AG04450 (cell line): ENCODE measurements at regions of chr13 and their contacts with region 1.

Region 1: DNA sequence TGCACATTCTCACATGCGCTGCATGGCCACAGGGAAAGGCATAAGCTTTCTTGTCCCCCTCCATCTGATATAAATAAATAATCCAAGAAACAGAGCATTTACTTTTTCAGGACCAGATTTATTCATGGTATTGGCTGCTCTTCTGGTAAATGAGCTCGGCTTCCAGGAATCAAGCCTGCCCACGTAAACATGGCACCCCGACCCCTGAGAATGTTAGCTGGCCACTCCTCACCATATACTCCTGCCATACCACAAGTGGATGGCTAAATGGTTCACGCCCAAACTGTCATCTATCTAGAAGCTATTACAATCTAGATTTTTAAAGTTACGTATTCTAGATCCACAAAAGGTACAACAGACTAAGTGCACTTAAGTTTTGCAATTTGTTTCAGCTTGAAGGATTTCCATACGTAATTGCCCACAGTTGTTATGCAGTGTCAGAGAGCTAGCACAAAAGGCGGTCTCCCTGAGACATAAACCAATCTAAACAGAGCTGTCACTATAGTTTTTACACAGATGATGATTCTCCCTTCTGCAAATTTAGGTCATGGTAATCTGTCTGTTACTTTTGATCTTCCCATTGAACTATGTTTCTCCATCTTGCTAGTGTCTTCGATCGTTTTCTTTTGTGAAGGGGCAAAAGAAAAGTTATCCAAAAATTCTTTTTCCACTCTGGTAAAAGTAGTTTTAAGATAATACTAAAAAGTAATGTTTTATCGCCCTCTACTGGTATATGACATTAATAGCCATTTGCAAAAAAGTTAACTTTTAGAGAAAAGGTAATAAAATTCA is 16.2 kb upstream of the FOXO1 start:
- DNase-seq: no peak
- H3K4me3 ChIP-seq: no peak overlapping the region
- H3K27ac ChIP-seq: no peak overlapping the region
- H3K27me3 ChIP-seq: no peaks in the 10 kb centered on the region
- CTCF ChIP-seq: peak; percentile 53

Region 2: GRCh38 chr13:39684531-39685137 is 998.0 kb before region 1 on chr13:
- CTCF ChIA-PET with region 1: interaction called, 42 read pairs
- POLR2A ChIA-PET with region 1: no interaction called
- DNase-seq: no peak
- H3K4me3 ChIP-seq: no peak overlapping the region
- H3K27ac ChIP-seq: no peak overlapping the region
- H3K27me3 ChIP-seq: no peaks in the 10 kb centered on the region
- CTCF ChIP-seq: peak; percentile 34

Region 3: GRCh38 chr13:39942552-39943273 is 739.9 kb before region 1 on chr13:
- CTCF ChIA-PET with region 1: interaction called, 44 read pairs
- POLR2A ChIA-PET with region 1: no interaction called
- DNase-seq: peak; percentile 33
- H3K4me3 ChIP-seq: no peak overlapping the region
- H3K27ac ChIP-seq: no peak overlapping the region
- H3K27me3 ChIP-seq: peaks cover 4% of the 10 kb centered on the region
- CTCF ChIP-seq: peak; percentile 100

Region 4: DNA sequence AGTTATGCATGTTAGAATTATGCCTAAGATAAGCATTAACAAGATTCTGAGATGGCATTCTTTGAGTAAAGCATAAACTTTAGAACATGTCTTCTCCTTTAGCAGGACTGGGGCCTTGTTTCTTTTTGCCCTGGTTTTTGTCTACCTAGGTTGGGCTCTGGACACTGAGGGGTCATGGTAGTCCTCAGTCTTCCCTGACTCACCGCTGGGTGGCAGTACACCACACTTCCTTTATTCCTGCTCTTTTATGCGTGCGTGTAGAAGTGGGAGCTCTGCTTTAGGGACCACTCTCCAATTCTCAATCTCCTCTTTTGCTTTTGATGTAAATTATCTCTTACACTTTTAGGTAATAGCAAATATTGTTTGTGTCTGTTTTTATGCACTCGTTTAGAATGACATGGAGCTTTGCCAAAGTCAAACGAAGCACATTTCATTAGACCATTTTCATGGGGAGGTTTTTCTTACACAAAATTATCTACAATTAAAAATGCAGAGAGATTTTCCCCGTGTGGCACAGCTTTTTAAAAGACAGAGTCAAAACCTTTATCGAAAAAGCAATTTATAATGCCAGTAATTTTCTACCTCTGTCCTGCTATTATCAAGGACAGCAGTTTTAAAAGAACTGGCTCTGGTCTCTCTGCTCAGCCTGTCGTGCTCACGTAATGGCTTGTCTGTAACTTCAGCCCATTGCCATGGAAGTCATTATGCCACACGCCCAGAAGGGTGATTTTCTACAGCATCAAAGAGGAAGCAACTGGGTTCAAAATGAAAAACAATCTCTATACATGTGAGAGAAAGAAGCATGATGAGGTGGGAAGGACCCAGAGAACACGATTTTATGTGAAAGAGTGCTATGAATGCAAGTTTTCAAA is 613.2 kb before region 1 on chr13:
- CTCF ChIA-PET with region 1: interaction called, 138 read pairs
- POLR2A ChIA-PET with region 1: interaction called, 3 read pairs
- DNase-seq: peak; percentile 23
- H3K4me3 ChIP-seq: no peak overlapping the region
- H3K27ac ChIP-seq: no peak overlapping the region
- H3K27me3 ChIP-seq: no peaks in the 10 kb centered on the region
- CTCF ChIP-seq: peak; percentile 84

Region 5: DNA sequence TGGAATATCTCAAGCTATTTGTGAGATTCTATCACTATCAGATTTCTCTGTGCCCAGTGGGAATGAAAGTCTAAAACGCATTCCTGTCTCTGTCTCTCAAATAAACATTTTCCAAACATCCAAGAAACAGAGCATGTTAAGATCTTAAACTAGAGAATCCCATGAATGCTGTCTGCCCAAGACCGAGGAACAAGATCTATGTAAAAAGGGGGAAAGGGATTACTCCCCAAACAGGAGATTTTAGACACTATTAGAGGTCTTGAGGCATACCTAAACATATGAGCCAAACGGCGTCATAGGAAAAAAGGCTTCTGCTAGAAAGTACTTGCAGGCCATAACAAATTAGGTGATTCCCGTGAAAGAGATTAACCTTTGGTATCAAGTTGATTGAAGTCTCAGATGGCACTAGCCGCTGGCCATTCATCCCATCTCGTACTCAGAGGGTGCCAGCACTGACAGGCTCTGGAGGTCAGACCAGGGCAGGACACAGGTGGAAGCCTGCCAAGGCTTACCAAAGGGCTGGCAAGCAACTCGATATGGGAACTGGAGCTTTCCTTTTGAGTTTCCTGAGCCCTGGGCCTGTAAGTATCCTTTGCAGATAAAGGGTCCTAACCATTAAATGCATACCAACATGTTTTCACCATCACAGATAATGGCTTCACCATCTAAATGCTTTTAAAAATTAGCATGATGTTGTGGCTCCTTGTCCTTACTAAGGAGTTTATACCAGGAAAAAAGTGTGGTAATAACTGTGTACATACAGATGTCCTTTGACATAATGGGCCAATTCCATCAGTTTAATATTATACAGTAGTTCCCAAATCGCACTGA is 241.4 kb before region 1 on chr13:
- CTCF ChIA-PET with region 1: no interaction called
- POLR2A ChIA-PET with region 1: no interaction called
- DNase-seq: no peak
- H3K4me3 ChIP-seq: no peak overlapping the region
- H3K27ac ChIP-seq: no peak overlapping the region
- H3K27me3 ChIP-seq: peaks cover 3% of the 10 kb centered on the region
- CTCF ChIP-seq: no peak

Region 6: GRCh38 chr13:40666905-40667621 is 15.6 kb before region 1 on chr13:
- CTCF ChIA-PET with region 1: interaction called, 26 read pairs
- POLR2A ChIA-PET with region 1: no interaction called
- DNase-seq: no peak
- H3K4me3 ChIP-seq: peak overlapping the region; percentile 64
- H3K27ac ChIP-seq: no peak overlapping the region
- H3K27me3 ChIP-seq: peaks cover 43% of the 10 kb centered on the region
- CTCF ChIP-seq: no peak

Region 7: DNA sequence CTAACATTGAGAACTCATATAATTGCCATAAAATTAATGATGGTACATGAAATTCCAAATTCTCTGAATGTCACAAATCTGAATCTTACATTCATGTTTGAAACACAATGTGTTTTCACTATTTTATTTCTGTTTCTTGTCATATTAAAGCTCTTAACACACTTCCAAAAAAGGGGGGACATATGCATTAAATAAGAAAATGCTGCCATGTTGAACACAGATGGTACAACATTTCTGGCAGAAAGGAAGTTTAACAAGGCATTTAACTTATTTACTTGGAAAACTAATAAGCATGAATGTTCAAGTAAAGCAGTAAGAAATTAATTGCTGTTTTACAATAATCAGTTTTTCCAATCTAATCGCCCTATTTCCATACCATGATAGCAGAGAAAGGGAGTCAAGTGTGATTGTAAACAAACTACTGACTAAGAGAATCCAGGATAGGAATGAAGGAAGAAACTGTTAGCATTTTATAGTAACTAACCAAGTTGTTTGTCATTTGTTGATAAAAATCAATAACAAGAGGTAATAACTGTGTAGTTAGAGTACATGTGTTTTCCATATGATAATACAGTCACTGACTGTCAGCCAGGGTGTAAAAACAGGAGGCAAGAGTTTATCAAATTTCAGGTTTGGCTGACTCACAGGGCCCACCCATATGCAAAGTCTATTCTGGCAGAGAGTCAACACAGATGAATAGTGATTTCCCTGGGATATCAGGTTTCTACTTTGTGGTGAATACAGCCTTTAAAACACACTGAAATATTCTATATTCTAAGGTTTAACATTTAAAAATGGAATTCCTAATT is 10.5 kb before region 1 on chr13:
- CTCF ChIA-PET with region 1: interaction called, 26 read pairs
- POLR2A ChIA-PET with region 1: interaction called, 3 read pairs
- DNase-seq: peak; percentile 15
- H3K4me3 ChIP-seq: no peak overlapping the region
- H3K27ac ChIP-seq: no peak overlapping the region
- H3K27me3 ChIP-seq: peaks cover 30% of the 10 kb centered on the region
- CTCF ChIP-seq: no peak